Lower lobe of right lung (tissue), 2 donors: ENCODE measurements at regions of chr1 and their contacts with region 1.

Region 1: GRCh38 chr1:147172168-147172992 is at the start of gene PRKAB2:
- DNase-seq: peak; percentile 98
- ATAC-seq: peak; percentile 98 to 99
- H3K4me3 ChIP-seq: peak within 1 kb of the TSS; percentile 90
- H3K27ac ChIP-seq: peak within 1 kb of the TSS; percentile 94
- H3K4me1 ChIP-seq: peaks cover 25% of the 10 kb centered on the region
- H3K27me3 ChIP-seq: no peaks in the 10 kb centered on the region
- CTCF ChIP-seq: peak; percentile 96
- total RNA-seq, gene PRKAB2: 11.3 TPM

Region 2: GRCh38 chr1:147242439-147243227 is 70.3 kb after region 1 on chr1 and contains the start of gene CHD1L:
- intact Hi-C with region 1: loop called (anchors 10 kb)
- DNase-seq: peak; percentile 98
- ATAC-seq: peak; percentile 96 to 99
- H3K4me3 ChIP-seq: peak within 1 kb of the TSS; percentile 91
- H3K27ac ChIP-seq: peak within 1 kb of the TSS; percentile 88
- H3K4me1 ChIP-seq: peaks cover 43% of the 10 kb centered on the region
- H3K27me3 ChIP-seq: no peaks in the 10 kb centered on the region
- CTCF ChIP-seq: peak; percentile 85
- total RNA-seq, gene CHD1L: 34.1 TPM